ENCODE measurements at regions of chr17 and their contacts with region 1.

Region 1: GRCh38 chr17:36948717-36949460 is at the start of gene AATF:
- DNase-seq: peak; percentile 87 to 98
- H3K4me3 ChIP-seq: peak within 1 kb of the TSS; percentile 78 to 91
- H3K27ac ChIP-seq: peak within 1 kb of the TSS; percentile 89 to 96
- H3K4me1 ChIP-seq: peaks cover 0 to 18% of the 10 kb centered on the region in 2 donors
- H3K27me3 ChIP-seq: peaks cover 16% of the 10 kb centered on the region
- CTCF ChIP-seq: no peak
- total RNA-seq, gene AATF: 19.5 TPM

Region 2: DNA sequence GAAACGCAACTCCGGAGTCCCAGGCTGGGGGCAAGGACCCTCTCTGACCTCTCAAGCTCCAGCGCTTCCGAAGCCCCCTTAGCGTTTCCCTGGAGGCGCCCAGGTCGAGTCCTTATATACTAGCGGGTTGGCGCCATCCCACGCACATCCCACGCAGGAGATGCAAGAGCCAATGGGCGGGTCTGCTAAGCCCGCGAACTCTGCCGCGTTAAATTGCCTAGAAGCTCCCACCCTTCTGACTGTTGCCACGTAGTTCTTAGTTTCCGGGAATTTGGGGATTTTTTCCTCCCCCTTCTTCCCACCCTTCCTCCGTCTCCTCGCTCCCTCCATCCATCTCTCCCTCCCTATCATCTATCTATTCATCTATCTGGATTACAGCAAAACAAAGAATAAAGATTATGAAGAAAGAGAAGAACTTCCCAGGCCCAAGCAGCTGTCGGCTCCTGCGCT is 1575.3 kb before region 1 on chr17 and contains the start of gene SLFN11:
- intact Hi-C with region 1: loop called (anchors 10 kb)
- DNase-seq: peak; percentile 79 to 95
- H3K4me3 ChIP-seq: peak within 1 kb of the TSS; percentile 78 to 87
- H3K27ac ChIP-seq: peak within 1 kb of the TSS; percentile 97
- H3K4me1 ChIP-seq: peaks cover 0 to 10% of the 10 kb centered on the region in 2 donors
- H3K27me3 ChIP-seq: no peaks in the 10 kb centered on the region
- CTCF ChIP-seq: no peak
- total RNA-seq, gene SLFN11: 30.3 TPM

Region 3: DNA sequence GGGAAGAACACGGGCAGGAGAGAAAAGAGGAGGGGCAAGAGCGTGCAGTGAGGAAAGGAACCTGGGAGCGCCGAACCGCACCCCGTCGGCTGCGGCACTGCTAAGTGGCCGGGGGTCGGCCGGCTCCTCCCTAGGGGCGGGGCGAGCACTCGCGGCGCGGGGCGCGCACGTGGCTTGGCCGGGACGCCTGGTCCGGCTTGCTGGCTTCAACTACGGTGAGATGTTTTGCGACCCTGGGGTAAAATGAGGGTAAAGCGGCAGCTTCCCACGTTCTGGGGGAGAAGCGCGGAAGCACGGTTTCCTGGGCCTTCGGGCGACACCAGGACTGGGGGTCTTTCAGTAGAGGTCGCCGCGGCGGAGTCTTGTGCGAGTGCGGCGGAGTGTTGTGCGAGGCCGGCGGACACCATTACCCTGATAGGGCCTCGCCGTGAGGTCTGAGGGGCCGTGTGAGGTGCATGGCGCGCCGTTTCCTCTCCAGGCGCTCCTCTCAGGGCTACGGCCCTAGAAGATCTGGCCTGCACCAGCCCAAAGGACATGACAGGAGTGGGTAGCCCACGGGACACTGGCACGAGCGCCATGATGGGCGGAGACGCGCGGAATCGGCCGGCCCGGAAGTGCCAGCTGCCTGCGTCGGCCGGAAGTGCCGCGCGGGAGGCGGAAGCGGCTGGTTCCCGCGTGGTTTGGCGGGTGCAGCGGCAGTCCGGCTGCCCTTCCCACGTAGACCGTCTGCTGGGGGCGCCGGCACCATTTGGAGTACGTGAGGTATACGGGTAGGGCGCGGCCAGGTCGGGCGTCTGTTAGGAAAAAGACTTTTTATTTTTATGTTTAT is 413.8 kb before region 1 on chr17 and contains the starts of genes MYO19 and PIGW:
- intact Hi-C with region 1: loop called (anchors 5 kb)
- DNase-seq: peak; percentile 39 to 92
- H3K4me3 ChIP-seq: peak within 1 kb of the TSS; percentile 78 to 90
- H3K27ac ChIP-seq: peak within 1 kb of the TSS; percentile 88 to 99
- H3K4me1 ChIP-seq: no peaks in the 10 kb centered on the region
- H3K27me3 ChIP-seq: no peaks in the 10 kb centered on the region
- CTCF ChIP-seq: peak in 1 of 3 experiments; percentile 7
- total RNA-seq, gene MYO19: 40.7 TPM
- total RNA-seq, gene PIGW: 6.0 TPM

Region 4: DNA sequence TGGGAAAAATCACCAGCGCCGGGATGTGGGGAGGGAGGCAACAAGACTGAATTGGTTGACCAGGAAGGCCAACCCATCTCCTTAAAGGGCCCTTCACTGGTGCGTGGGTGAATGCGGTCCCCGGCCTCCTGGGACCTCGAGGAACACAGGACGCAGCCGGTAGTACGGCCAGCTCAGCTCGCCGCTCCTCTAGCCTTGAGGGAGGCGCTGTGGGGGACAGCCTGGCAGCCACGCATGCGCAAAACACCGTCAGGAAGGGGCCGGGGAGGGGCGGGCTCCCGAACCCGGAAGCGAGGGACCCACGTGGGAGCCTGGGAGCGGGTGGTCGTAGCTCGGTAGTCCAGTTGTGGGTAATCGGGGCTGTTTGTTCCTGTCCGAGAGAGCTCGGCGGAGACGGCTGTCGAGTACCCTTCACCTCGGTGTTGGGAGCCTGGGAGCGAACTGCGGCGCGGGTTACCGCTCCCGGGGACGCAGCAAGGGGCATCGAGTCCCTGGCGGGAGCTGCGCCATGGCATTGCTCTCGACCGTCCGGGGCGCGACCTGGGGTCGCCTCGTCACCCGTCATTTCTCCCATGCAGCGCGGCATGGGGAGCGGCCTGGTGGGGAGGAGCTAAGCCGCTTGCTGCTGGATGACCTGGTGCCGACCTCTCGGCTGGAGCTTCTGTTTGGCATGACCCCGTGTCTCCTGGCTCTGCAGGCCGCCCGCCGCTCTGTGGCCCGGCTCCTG is 347.4 kb before region 1 on chr17 and contains the start of gene MRM1:
- intact Hi-C with region 1: loop called (anchors 5 kb)
- DNase-seq: peak; percentile 71 to 96
- H3K4me3 ChIP-seq: peak within 1 kb of the TSS; percentile 73 to 95
- H3K27ac ChIP-seq: peak within 1 kb of the TSS; percentile 87
- H3K4me1 ChIP-seq: peaks cover 3 to 20% of the 10 kb centered on the region in 2 donors
- H3K27me3 ChIP-seq: no peaks in the 10 kb centered on the region
- CTCF ChIP-seq: peak in 1 of 3 experiments; percentile 2
- total RNA-seq, gene MRM1: not detected

Region 5: DNA sequence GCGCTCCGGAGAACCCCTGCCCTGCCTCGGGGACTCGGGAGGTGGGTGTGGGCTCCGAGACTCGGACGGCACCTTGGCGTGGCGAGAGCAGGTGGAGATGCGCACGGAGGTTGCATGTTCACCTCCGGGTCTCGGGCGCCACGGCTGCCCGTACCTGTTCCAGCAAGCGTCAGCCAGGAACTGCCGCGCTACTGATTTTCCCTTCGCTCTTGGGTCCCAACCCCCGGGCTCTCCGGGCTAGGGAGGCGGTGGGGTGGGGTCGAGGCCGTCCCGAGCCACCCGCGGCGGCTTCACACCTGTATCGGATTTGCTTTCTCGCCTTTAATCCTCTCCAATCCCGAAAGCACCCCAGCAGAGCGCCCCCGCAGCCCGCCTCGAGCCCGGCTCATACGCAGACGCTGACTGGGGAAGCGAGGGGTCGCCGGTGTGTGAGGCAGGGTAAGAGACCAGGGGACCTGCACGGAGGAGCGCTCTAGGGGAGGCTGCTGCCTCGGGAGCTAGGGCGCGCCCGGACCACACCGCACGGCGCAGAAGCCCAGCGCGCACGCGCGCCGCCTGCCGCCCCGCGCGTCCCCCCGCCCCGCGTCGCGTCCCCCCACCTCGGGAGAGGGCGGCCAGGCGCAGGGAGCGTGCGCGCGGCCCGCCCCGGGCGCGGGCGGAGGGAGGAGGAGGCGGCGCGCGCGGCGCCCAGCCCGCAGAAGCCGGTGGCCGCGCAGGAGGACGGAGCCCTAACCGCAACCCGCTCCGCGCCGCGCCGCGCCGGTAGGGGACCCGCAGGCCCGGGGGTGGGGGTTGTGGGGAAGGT is 540.5 kb after region 1 on chr17 and contains the start of gene DUSP14:
- intact Hi-C with region 1: loop called (anchors 10 kb)
- DNase-seq: peak; percentile 12 to 84
- H3K4me3 ChIP-seq: peak within 1 kb of the TSS; percentile 96 to 99
- H3K27ac ChIP-seq: peak within 1 kb of the TSS; percentile 75 to 90
- H3K4me1 ChIP-seq: peaks cover 3 to 20% of the 10 kb centered on the region in 2 donors
- H3K27me3 ChIP-seq: no peaks in the 10 kb centered on the region
- CTCF ChIP-seq: no peak
- total RNA-seq, gene DUSP14: 4.6 TPM

Measured in ascending aorta (tissue), 2 donors.